MCF 10A (cell line): ENCODE measurements at regions of chr1 and their contacts with region 1.

Region 1: GRCh38 chr1:178465011-178465410 is 31.8 kb downstream of the CLEC20A start:
- DNase-seq: peak; percentile 74
- H3K4me3 Mint-ChIP-seq: peak overlapping the region; percentile 2
- H3K27ac Mint-ChIP-seq: peak overlapping the region; percentile 73
- H3K4me1 Mint-ChIP-seq: peaks cover 27% of the 10 kb centered on the region
- H3K27me3 Mint-ChIP-seq: no peaks in the 10 kb centered on the region
- CTCF ChIP-seq: no peak

Region 2: DNA sequence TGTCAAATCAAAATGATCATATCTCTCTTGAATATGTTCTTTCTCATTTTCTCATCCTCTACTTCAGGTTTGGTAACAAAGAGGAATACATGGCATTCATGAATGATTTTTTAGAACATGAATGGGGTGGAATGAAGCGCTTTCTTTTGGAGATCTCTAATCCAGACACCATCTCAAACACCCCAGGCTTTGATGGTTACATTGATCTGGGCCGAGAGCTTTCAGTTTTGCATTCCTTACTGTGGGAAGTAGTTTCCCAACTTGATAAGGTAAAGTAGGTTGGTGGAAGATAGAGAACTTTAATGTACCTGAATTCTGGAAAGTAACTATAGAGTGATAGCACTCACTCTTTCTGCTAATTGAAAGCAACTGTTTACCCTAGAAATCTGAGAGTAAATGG is 10.6 kb before region 1 on chr1:
- CTCF ChIA-PET with region 1: interaction called, 3 read pairs
- POLR2A ChIA-PET with region 1: interaction called, 11 read pairs
- intact Hi-C with region 1: no loop called
- DNase-seq: no peak
- H3K4me3 Mint-ChIP-seq: no peak overlapping the region
- H3K27ac Mint-ChIP-seq: no peak overlapping the region
- H3K4me1 Mint-ChIP-seq: peaks cover 10% of the 10 kb centered on the region
- H3K27me3 Mint-ChIP-seq: no peaks in the 10 kb centered on the region
- CTCF ChIP-seq: no peak